GM12878 (cell line): ENCODE measurements at regions of chr16 and their contacts with region 1.

Region 1: DNA sequence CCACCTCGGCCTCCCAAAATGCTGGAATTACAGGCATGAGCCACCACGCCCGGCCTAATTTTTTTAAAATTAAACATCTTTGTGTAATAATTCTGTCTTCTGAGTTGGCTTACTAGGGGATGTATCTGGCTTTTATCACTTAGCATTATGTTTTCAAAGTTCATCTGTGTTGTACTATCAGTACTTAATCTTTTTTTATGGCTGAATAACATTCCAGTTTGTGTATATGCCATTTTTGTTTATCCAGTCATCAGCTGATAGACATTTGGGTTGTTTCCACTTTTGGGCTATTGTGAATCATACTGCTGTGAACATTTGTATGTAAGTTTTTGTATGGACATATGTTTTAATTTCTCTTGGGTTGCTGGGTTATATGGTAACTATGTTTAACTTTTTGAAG is 69.0 kb downstream of the CHD9 start:
- DNase-seq: no peak
- ATAC-seq: no peak
- H3K4me3 ChIP-seq: no peak overlapping the region
- H3K27ac ChIP-seq: no peak overlapping the region
- H3K4me1 ChIP-seq: peaks cover 21% of the 10 kb centered on the region
- H3K27me3 ChIP-seq: no peaks in the 10 kb centered on the region
- CTCF ChIP-seq: no peak
- EP300 ChIP-seq: no peak
- POLR2A ChIP-seq: no peak
- RAD21 ChIP-seq: no peak

Region 2: DNA sequence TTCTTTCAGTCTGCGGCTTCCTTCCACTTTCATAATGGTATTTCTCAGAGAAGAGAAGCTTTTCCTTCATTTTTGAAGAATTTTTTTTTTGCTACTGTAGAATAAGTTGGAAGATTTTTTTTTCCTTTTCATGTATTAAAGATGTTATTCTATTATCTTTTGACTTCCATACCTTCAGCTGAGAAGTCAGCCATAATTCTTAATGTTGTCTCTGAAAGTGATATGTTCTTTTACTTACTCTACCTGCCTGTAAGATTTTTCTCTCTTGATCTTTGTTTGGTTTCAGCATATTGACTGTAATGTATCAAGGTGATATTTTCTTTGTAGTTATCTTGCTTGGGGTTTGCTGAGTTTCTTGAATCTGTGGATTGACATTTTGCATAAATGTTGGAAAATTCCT is 433.3 kb before region 1 on chr16:
- CTCF ChIA-PET with region 1: no interaction called
- POLR2A ChIA-PET with region 1: no interaction called
- RAD21 ChIA-PET with region 1: no interaction called
- SMC1A ChIA-PET with region 1: no interaction called
- in situ Hi-C with region 1: no loop called
- intact Hi-C with region 1: no loop called
- DNase-seq: no peak
- ATAC-seq: no peak
- H3K4me3 ChIP-seq: no peak overlapping the region
- H3K27ac ChIP-seq: no peak overlapping the region
- H3K4me1 ChIP-seq: no peaks in the 10 kb centered on the region
- H3K27me3 ChIP-seq: no peaks in the 10 kb centered on the region
- CTCF ChIP-seq: no peak
- EP300 ChIP-seq: no peak
- POLR2A ChIP-seq: no peak
- RAD21 ChIP-seq: no peak

Region 3: DNA sequence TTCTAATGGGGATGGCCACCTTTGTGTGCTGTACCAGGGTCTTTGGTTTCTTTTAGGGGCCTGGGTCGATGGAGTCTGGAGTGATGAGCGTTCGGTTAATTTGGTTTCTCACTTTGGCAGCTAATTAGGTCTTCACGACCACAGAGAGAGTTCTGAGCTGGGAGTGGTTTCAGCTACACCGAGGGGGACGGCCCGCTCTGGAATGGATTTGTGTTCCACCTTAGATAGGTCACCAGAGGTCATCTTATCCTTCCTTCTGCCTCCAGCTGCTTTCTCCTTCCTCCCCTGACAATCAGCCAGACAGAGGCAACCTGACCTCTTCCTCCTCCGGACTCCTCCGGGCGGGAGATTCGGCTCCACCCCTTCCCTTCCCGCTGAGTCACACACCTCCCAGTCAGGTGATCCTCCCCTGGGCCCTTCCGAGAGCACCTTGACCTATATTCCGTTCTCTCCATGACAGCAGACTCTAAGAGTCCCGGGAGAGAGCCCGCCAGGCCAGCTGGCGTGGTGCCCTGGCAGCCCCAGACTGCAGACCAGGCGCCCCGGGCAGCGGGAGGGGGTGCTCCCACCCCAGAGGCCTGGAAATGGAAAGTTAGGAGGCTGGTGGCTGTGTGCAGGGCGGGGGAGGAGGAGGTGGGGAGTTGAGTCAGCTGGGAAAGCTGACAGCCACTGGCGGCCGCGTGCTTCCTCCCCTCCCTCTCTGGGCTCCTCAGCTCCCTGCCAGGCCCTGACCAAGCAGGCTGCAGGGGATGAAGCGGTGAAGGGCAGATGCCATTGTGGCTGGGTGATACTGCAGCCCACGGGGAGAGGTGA is 24.2 kb before region 1 on chr16:
- CTCF ChIA-PET with region 1: interaction called, 5 read pairs
- POLR2A ChIA-PET with region 1: interaction called, 9 read pairs
- RAD21 ChIA-PET with region 1: interaction called, 17 read pairs
- SMC1A ChIA-PET with region 1: interaction called, 16 read pairs
- in situ Hi-C with region 1: no loop called
- intact Hi-C with region 1: no loop called
- DNase-seq: peak; percentile 68
- ATAC-seq: peak; percentile 75
- H3K4me3 ChIP-seq: peak overlapping the region; percentile 79
- H3K27ac ChIP-seq: peak overlapping the region; percentile 96
- H3K4me1 ChIP-seq: peaks cover 25% of the 10 kb centered on the region
- H3K27me3 ChIP-seq: no peaks in the 10 kb centered on the region
- CTCF ChIP-seq: no peak
- EP300 ChIP-seq: peak; percentile 7 to 55; a peak in 1 of 4 replicates
- POLR2A ChIP-seq: peak; percentile 50
- RAD21 ChIP-seq: no peak

Region 4: GRCh38 chr16:53111078-53111791 is 12.5 kb before region 1 on chr16:
- CTCF ChIA-PET with region 1: interaction called, 6 read pairs
- POLR2A ChIA-PET with region 1: interaction called, 6 read pairs
- RAD21 ChIA-PET with region 1: interaction called, 14 read pairs
- SMC1A ChIA-PET with region 1: interaction called, 23 read pairs
- in situ Hi-C with region 1: no loop called
- intact Hi-C with region 1: no loop called
- DNase-seq: no peak
- ATAC-seq: peak; percentile 79
- H3K4me3 ChIP-seq: no peak overlapping the region; the same call in 1 of the 2 replicates
- H3K27ac ChIP-seq: peak overlapping the region; percentile 77
- H3K4me1 ChIP-seq: peaks cover 28% of the 10 kb centered on the region
- H3K27me3 ChIP-seq: no peaks in the 10 kb centered on the region
- CTCF ChIP-seq: no peak
- EP300 ChIP-seq: no peak
- POLR2A ChIP-seq: no peak
- RAD21 ChIP-seq: no peak